Aorta (tissue), 5 donors: ENCODE measurements at regions of chr5 and their contacts with region 1.

Region 1: DNA sequence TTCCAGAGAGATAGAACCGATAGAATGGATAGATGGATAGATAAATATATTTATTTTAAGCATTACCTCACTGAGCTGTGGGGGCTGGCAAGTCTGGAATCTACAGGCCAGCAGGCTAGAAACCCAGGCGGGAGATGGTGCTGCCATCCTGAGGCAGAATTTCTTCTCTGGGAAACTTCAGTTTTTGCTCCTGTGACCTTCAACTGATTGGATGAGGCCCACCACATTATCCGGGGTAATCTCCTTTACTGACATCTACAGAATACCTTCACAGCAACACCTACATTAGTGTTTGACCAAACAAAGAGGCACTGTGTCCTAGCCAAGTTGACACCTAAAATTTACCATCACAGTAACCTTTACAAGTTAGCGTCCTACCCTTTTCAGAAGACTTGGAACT is 29.2 kb upstream of the TENT4A start:
- DNase-seq: no peak
- ATAC-seq: no peak
- H3K4me3 ChIP-seq: no peak overlapping the region
- H3K27ac ChIP-seq: no peak overlapping the region
- H3K4me1 ChIP-seq: no peaks in the 10 kb centered on the region
- H3K27me3 ChIP-seq: no peaks in the 10 kb centered on the region

Region 2: DNA sequence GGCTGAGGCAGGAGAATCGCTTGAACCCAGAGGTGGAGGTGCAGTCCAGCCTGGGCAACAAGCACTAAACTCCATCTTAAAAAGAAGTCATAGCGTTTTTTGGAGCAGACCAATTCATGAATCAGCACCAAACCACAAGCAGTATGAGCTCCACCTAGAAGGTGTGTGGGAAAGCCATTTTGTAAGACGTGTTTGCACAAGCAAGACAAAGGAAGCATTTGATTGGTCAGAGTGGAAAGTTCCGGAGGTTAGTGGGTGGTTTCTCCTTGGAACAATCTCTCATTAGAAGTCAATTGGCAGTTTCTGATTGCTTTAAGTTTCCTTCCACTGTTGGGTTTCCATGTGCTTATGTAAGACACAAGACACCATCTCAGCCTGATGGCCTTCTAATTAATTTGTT is 45.8 kb before region 1 on chr5:
- intact Hi-C with region 1: loop called in 1 of 2 experiments (anchors 2 kb)
- DNase-seq: no peak
- ATAC-seq: no peak
- H3K4me3 ChIP-seq: no peak overlapping the region
- H3K27ac ChIP-seq: no peak overlapping the region
- H3K4me1 ChIP-seq: no peaks in the 10 kb centered on the region
- H3K27me3 ChIP-seq: no peaks in the 10 kb centered on the region

Region 3: DNA sequence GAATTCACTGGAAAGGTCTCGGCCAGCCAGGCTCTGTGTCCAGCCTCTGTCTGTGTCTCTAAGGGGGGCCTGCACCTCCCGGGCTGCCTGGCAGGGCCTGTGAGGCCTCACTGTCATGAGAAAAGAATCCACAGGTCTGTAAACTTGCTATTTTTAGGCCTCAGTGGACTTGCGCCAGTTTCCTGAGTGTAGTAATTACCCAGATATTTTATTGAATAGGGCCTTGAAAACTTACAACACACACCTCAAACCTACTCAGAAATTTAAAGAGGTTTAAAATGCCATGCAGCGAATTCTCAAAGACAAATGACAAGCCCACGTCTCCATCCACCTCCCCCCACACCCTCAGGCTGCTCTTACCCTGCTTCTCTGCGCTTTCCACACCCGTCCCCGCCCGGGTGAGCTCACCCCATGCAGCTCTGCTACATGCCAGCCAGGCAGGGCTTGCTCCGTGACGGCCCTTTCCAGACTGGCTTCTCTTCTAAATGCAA is 20.3 kb after region 1 on chr5:
- intact Hi-C with region 1: loop called in 1 of 2 experiments (anchors 1 kb)
- DNase-seq: peak; percentile 80 to 87
- ATAC-seq: peak; percentile 76
- H3K4me3 ChIP-seq: no peak overlapping the region
- H3K27ac ChIP-seq: peak overlapping the region; percentile 96
- H3K4me1 ChIP-seq: peaks cover 0 to 3% of the 10 kb centered on the region in 2 donors
- H3K27me3 ChIP-seq: no peaks in the 10 kb centered on the region

Region 4: DNA sequence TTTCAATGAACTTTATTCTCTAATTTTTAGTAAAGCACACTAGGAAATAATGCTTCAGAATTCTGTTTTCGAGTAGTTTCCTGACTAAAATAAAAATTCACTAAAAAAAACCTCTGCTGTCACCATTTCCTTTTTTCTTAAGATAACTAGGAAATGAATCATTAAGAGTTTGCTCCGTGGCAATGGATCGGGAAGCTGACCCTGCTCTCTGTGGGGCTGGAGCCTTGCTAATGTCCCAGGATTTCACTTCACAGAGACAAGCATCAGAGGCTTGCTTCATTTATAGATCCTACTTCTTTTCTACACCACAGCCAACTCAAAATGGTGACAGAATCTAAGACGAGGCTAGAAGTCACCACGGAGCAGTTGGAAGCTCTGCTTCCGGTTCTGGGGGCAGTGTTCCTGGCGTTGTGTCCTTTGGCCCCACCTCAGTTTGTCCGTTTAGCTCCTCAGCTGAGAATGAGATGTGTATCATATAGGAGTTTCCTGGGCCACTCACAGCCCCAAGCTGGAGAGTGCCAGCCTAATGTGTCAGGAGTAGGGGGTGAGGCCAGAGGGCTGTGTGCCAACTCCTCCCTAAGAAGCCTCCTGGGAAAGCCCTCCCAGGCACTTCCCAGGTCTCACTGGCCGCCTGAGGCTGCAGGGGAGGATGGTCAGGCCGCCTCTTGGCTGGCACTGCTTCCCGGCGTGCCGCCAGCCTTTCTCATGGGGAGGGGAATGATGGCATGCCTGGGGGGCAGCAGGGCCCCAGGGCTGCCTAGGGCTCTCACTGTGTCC is 48.7 kb after region 1 on chr5:
- intact Hi-C with region 1: no loop called
- DNase-seq: peak; percentile 71 to 89
- ATAC-seq: peak; percentile 65
- H3K4me3 ChIP-seq: no peak overlapping the region
- H3K27ac ChIP-seq: peak overlapping the region in 1 of 2 donors; percentile 65
- H3K4me1 ChIP-seq: peaks cover 0 to 3% of the 10 kb centered on the region in 2 donors
- H3K27me3 ChIP-seq: no peaks in the 10 kb centered on the region

Region 5: DNA sequence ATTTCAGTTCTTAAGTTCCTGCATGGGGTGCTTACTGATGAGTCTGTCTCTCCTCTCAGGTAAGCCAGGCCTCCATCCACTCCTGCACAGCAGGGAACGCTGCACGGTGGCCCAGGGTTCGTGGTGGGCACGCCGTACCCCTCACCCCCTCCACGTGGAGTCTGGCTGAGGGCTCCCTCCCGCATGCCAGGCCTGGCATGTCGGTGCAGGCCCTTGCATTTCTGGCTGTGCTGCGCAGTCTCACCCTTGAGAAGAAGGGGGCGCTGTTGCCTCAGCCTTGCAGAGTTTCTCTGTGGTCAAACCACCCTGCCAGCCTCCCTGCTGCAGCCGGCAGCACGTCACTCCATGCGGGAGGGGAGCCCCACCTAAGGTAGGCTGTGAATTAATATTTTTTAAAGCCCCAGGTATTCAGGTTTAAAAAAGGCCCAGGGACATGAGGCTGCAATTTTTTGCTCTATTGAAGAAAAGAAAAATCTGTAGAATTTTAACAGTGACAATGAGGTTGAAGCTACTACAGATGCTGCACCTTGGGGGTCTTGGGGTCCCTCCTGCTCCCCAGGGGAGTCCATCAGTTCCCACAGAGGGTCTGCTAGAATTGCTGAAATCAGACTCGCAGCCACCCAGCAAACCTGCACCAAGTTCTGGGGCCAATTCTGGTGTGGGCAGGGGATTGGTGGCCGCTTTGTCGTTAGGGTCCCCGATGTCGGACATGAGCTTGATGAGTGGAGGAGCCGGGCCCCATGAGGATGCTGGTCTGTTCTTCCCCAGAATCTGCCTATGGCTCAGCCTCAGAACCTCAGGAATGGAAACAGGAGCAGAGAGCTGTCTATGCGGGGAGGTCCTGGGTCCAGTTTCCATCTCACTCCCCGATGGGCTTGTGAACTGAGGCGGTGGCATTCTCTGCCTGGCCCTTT is 81.8 kb after region 1 on chr5:
- intact Hi-C with region 1: no loop called
- DNase-seq: peak; percentile 90 to 93
- ATAC-seq: peak; percentile 84
- H3K4me3 ChIP-seq: no peak overlapping the region
- H3K27ac ChIP-seq: no peak overlapping the region
- H3K4me1 ChIP-seq: no peaks in the 10 kb centered on the region
- H3K27me3 ChIP-seq: no peaks in the 10 kb centered on the region